A673 (cell line): ENCODE measurements at regions of chr2 and their contacts with region 1.

Region 1: DNA sequence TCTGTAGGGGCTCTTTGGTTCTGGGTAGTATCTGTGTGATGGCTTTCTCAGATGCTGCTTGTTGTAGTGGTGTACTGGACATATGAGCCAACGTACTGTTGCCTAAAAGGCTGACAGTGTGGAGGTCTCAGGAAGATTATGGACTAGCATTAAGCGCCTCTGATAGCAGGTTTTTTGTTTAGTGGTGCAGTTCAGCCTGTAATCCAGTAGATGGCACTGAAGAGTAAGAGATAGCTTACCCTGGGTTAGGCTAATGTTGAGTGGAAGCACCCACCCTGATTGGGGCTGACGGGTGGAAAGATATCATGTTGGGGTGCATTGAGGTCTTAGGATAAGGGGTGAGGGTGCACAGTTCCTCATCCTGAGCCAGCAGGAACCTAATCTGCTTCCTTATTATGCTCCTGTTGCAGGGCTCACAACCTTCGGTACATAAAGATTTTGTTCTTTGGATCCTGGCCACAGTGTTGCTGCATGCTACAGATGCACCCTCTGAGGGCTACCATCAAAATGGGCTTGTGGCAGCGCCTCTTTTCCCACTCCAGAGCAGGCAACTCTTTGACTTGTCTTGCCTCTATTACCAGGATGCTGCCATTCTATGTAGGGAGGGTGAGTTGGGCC is 79.6 kb downstream of the MSTN start:
- DNase-seq: peak; percentile 37
- H3K4me3 ChIP-seq: no peak overlapping the region
- H3K27ac ChIP-seq: no peak overlapping the region
- H3K4me1 ChIP-seq: no peaks in the 10 kb centered on the region
- H3K27me3 ChIP-seq: no peaks in the 10 kb centered on the region
- CTCF ChIP-seq: peak; percentile 66

Region 2: GRCh38 chr2:190365499-190366204 is 382.8 kb after region 1 on chr2:
- CTCF ChIA-PET with region 1: no interaction called
- POLR2A ChIA-PET with region 1: no interaction called
- intact Hi-C with region 1: loop called (anchors 10 kb)
- DNase-seq: no peak
- H3K4me3 ChIP-seq: no peak overlapping the region
- H3K27ac ChIP-seq: no peak overlapping the region
- H3K4me1 ChIP-seq: no peaks in the 10 kb centered on the region
- H3K27me3 ChIP-seq: no peaks in the 10 kb centered on the region
- CTCF ChIP-seq: no peak